Panc1 (cell line): ENCODE measurements at regions of chr7 and their contacts with region 1.

Region 1: DNA sequence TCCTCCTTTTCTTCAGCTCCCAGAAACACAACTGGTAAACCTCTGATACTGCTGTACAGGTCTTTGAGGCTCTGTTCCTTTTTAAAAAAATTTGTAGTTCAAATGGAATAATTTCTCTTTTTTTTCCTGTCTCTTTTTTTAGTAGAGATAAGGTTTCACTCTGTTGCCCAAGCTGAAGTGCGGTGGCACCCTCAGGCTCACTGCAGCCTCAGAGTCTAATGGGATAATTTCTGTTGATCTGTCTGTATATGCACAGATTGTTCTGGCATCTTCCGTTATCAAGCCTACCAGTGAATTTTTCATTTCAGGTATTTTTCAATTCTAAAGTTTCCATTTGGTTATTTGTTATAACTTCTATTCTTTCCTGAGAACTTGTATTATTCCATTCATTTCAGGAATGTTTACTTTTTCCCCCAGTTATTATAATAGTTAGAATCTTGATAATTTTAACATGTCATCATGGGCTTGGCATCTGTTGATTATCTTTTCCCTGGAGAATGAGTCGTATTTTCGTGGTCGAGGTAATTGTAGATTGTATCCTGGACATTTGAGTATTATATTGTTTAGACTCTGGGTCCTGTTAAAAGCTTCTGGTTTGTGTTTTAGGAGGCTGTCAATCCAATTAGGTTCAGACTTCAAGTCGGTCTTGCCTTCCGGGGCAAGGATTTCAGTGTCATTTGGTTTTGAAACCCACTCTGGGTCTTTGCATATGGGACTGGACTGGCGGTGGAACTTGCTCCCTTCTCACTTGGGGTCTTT is 24.5 kb downstream of the CRCP start:
- DNase-seq: no peak
- ATAC-seq: no peak
- H3K4me3 ChIP-seq: no peak overlapping the region
- H3K27ac ChIP-seq: no peak overlapping the region
- H3K4me1 ChIP-seq: no peaks in the 10 kb centered on the region
- H3K27me3 ChIP-seq: no peaks in the 10 kb centered on the region
- CTCF ChIP-seq: no peak

Region 2: GRCh38 chr7:66150471-66150870 is 11.3 kb after region 1 on chr7:
- CTCF ChIA-PET with region 1: no interaction called
- POLR2A ChIA-PET with region 1: interaction called, 10 read pairs
- in situ Hi-C with region 1: no loop called
- intact Hi-C with region 1: no loop called
- DNase-seq: no peak
- ATAC-seq: no peak
- H3K4me3 ChIP-seq: no peak overlapping the region
- H3K27ac ChIP-seq: no peak overlapping the region
- H3K4me1 ChIP-seq: no peaks in the 10 kb centered on the region; the same call in 1 of the 2 replicates
- H3K27me3 ChIP-seq: no peaks in the 10 kb centered on the region
- CTCF ChIP-seq: no peak

Region 3: DNA sequence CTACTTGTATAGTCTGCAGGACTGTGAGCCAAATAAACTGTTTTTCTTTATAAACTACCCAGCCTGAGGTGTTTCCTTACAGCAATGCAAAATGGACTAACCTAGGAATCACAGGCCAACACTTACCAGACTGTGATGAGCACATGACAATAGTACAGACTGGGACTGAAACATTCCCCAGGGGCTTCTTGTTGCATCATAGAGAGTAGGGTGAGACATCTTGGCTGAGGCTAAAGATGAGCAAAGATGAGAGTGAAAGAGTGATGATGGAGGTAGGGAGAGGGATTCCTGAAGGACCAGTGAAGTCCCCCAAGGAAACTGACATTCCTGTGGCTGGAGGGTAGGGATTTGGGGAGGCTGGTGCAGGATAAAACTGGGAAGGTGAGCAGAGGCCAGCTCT is 260.4 kb after region 1 on chr7:
- CTCF ChIA-PET with region 1: no interaction called
- POLR2A ChIA-PET with region 1: no interaction called
- in situ Hi-C with region 1: no loop called
- intact Hi-C with region 1: no loop called
- DNase-seq: no peak
- ATAC-seq: no peak
- H3K4me3 ChIP-seq: no peak overlapping the region
- H3K27ac ChIP-seq: no peak overlapping the region
- H3K4me1 ChIP-seq: no peaks in the 10 kb centered on the region
- H3K27me3 ChIP-seq: no peaks in the 10 kb centered on the region
- CTCF ChIP-seq: no peak